Breast epithelium (tissue), 4 donors: ENCODE measurements at regions of chr7 and their contacts with region 1.

Region 1: DNA sequence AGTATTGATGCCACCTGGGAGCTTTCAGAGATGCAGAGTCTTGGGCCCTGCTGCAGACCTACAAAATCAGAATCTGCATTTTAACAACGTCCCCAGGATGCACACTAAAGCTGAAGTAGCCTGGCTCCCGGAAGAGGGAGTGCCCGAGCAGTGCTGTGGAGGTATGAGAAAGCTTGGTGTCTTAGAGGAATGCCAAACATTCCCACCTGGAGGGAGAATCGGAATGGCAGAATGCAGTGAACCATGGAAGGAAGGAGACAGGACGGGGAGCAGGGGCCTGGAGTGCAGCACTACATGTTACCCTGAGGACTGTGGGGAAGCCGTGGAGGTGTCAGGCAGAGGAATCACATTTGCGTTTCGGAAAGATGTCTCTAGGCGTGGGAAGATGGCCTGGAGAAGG is 90.9 kb downstream of the AOAH start:
- DNase-seq: no peak
- H3K4me3 ChIP-seq: no peak overlapping the region
- H3K27ac ChIP-seq: no peak overlapping the region
- H3K4me1 ChIP-seq: no peaks in the 10 kb centered on the region
- H3K27me3 ChIP-seq: no peaks in the 10 kb centered on the region
- CTCF ChIP-seq: no peak
- POLR2A ChIP-seq: no peak

Region 2: GRCh38 chr7:37181550-37181932 is 548.2 kb after region 1 on chr7:
- intact Hi-C with region 1: loop called (anchors 5 kb)
- DNase-seq: no peak
- H3K4me3 ChIP-seq: no peak overlapping the region
- H3K27ac ChIP-seq: no peak overlapping the region
- H3K4me1 ChIP-seq: no peaks in the 10 kb centered on the region
- H3K27me3 ChIP-seq: no peaks in the 10 kb centered on the region
- CTCF ChIP-seq: no peak
- POLR2A ChIP-seq: no peak